Activated B cell treated with CpG ODN at 0.5 μM for 24 hours (primary cell): ENCODE measurements at regions of chr20 and their contacts with region 1.

Region 1: DNA sequence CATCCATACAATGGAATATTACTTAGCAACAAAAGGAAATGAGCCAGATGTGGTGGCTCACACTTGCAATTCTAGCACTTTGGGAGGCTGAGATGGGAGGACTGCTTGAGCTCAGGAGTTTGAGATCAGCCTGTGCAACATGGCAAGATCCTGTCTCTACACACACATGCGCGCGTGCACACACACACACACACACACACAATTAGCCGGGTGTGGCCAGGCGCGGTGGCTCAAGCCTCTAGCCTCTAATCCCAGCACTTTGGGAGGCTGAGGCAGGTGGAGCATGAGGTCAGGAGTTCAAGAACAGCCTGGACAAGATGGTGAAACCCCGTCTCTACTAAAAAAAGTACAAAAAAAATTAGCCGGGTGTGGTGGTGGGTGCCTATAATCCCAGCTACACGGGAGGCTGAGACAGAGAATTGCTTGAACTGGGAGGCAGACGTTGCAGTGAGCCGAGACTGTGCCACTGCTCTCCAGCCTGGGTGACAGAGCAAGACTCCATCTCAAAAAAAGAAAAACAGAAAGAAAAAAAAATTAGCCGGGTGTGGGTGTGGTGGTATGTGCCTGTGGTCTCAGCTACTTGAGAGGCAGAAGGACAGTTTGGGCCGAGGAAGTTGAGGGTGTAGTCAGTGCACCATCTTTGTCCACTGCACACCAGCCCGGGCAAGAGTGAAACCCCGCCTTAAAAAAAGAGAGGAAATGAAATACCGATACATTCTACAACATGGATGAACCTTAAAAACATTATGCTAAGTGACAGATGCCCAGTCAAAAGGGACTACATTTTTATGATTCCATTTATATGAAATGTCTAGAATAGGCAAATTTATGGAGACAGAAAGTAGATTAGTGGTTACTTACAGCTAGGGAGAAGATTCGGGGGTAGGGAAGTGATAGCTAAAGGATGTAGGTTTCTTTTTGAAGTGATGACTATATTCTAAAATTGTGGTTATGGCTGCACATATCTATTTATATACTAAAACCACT is 52.5 kb downstream of the RBL1 start:
- DNase-seq: peak; percentile 15
- ATAC-seq: peak; percentile 61
- H3K4me3 Mint-ChIP-seq: peak overlapping the region; percentile 80
- H3K27ac Mint-ChIP-seq: peak overlapping the region; percentile 97
- H3K4me1 Mint-ChIP-seq: peaks cover 30% of the 10 kb centered on the region
- H3K27me3 Mint-ChIP-seq: no peaks in the 10 kb centered on the region
- CTCF ChIP-seq: no peak

Region 2: DNA sequence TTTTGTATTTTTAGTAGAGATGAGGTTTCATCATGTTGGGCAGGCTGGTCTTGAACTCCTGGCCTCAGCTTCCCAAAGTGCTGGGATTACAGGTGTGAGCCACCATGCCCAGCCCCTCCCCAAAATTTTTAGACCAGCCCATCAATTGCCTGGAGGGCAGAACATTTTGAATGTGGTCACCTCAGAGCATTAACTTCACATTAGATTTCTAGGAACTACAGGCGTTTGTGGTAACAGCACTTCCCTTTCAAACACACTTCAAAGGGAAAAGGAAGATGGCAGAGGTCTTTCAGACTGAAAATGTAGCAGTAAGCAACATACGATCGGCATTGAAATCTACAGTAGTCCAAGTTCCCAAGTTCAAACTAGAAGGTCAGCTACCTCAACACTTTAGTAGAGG is 385.0 kb before region 1 on chr20:
- CTCF ChIA-PET with region 1: no interaction called
- POLR2A ChIA-PET with region 1: no interaction called
- intact Hi-C with region 1: no loop called
- DNase-seq: no peak
- ATAC-seq: no peak
- H3K4me3 Mint-ChIP-seq: no peak overlapping the region
- H3K27ac Mint-ChIP-seq: no peak overlapping the region
- H3K4me1 Mint-ChIP-seq: no peaks in the 10 kb centered on the region
- H3K27me3 Mint-ChIP-seq: no peaks in the 10 kb centered on the region
- CTCF ChIP-seq: no peak

Region 3: GRCh38 chr20:36847009-36847709 is 196.1 kb before region 1 on chr20:
- CTCF ChIA-PET with region 1: no interaction called
- POLR2A ChIA-PET with region 1: no interaction called
- intact Hi-C with region 1: loop called (anchors 2 kb)
- DNase-seq: no peak
- ATAC-seq: no peak
- H3K4me3 Mint-ChIP-seq: peak overlapping the region; percentile 74
- H3K27ac Mint-ChIP-seq: peak overlapping the region; percentile 95
- H3K4me1 Mint-ChIP-seq: peaks cover 91% of the 10 kb centered on the region
- H3K27me3 Mint-ChIP-seq: no peaks in the 10 kb centered on the region
- CTCF ChIP-seq: no peak

Region 4: GRCh38 chr20:36951198-36951976 is 91.9 kb before region 1 on chr20 and contains the start of gene SAMHD1:
- CTCF ChIA-PET with region 1: no interaction called
- POLR2A ChIA-PET with region 1: interaction called, 7 read pairs
- intact Hi-C with region 1: loop called (anchors 1 kb)
- DNase-seq: peak; percentile 85
- ATAC-seq: peak; percentile 97
- H3K4me3 Mint-ChIP-seq: peak within 1 kb of the TSS; percentile 96
- H3K27ac Mint-ChIP-seq: peak within 1 kb of the TSS; percentile 81
- H3K4me1 Mint-ChIP-seq: peaks cover 24% of the 10 kb centered on the region
- H3K27me3 Mint-ChIP-seq: no peaks in the 10 kb centered on the region
- CTCF ChIP-seq: no peak
- total RNA-seq, gene SAMHD1: 15.1 and 16.4 TPM in 2 replicates

Region 5: DNA sequence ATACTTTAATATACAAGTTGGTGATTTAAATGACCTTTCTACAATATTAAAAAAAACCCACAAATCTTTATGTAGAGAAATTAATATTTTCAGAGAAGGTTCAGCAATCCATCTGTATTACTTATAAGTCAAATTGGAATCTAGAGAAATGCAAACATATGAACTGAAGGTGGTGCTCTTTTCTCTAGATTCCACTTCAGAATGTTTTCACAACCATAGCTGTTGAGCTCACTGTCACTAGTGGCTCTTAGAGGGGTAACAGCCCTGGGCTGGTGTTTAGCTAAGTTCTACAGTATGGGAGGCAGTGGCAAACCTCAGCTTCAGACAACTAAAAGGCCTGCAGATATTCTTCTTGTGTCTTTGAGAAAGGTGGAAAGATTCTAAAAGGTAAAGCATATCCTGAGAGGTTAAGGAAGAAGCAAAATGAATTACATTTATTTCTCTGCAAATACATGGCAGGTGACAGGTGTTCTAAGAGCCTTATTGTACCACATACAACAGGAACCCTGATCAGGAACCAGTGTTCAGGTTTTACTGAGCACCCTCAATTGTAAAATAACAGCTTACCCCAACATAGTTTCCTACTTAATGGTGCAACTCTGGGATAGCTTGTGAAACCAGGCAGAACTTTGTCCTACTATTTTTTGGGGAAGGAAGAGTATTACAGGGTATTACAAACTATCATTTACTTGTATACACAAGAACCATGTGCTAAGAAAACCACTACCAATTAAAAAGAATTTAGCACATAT is 35.2 kb before region 1 on chr20:
- CTCF ChIA-PET with region 1: no interaction called
- POLR2A ChIA-PET with region 1: interaction called, 24 read pairs
- intact Hi-C with region 1: loop called (anchors 1 kb)
- DNase-seq: no peak
- ATAC-seq: peak; percentile 26
- H3K4me3 Mint-ChIP-seq: peak overlapping the region; percentile 17
- H3K27ac Mint-ChIP-seq: peak overlapping the region; percentile 69
- H3K4me1 Mint-ChIP-seq: peaks cover 45% of the 10 kb centered on the region
- H3K27me3 Mint-ChIP-seq: no peaks in the 10 kb centered on the region
- CTCF ChIP-seq: no peak

Region 6: DNA sequence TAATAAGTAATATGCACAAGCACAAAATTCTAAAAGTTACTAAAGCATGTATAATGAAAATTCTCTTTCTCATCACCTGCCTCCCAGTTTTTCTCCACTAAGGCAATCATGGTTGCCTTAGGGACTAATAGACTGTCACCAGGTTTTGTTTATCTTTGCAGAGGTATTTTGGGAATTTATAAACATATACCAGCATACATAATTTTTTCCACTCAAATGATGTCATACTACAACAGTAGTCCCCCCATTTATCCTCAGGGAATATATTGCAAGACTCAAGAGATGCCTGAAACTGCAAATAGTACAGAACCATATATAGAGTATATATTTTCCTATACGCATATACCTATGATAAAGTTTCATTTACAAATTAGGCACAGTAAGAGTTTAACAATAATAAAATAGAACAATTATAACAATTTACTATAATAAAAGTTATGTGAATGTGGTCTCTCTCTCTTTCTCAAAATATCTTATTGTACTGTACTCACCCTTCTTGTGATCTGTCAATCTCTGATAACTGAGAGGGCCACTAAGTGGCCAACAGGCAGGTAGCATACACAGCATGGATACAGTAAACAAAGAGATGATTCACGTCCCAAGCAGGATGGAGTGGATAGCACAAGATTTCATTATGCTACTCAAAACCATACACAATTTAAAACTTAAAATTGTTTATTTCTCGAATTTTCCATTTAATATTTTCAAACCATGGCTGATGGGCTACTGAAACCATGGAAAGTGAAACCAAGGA is 32.8 kb after region 1 on chr20:
- CTCF ChIA-PET with region 1: interaction called, 5 read pairs
- POLR2A ChIA-PET with region 1: interaction called, 3 read pairs
- intact Hi-C with region 1: loop called (anchors 5 kb)
- DNase-seq: no peak
- ATAC-seq: no peak
- H3K4me3 Mint-ChIP-seq: no peak overlapping the region
- H3K27ac Mint-ChIP-seq: no peak overlapping the region
- H3K4me1 Mint-ChIP-seq: peaks cover 23% of the 10 kb centered on the region
- H3K27me3 Mint-ChIP-seq: no peaks in the 10 kb centered on the region
- CTCF ChIP-seq: no peak

Region 7: GRCh38 chr20:37095599-37096414 is 52.5 kb after region 1 on chr20 and contains the start of gene RBL1:
- CTCF ChIA-PET with region 1: no interaction called
- POLR2A ChIA-PET with region 1: interaction called, 43 read pairs
- intact Hi-C with region 1: loop called (anchors 1 kb)
- DNase-seq: peak; percentile 85
- ATAC-seq: peak; percentile 87
- H3K4me3 Mint-ChIP-seq: peak within 1 kb of the TSS; percentile 99
- H3K27ac Mint-ChIP-seq: peak within 1 kb of the TSS; percentile 100
- H3K4me1 Mint-ChIP-seq: peaks cover 33% of the 10 kb centered on the region
- H3K27me3 Mint-ChIP-seq: no peaks in the 10 kb centered on the region
- CTCF ChIP-seq: no peak
- total RNA-seq, gene RBL1: 18.6 and 20.4 TPM in 2 replicates

Region 8: GRCh38 chr20:37356387-37356786 is 313.1 kb after region 1 on chr20:
- CTCF ChIA-PET with region 1: no interaction called
- POLR2A ChIA-PET with region 1: no interaction called
- intact Hi-C with region 1: no loop called
- DNase-seq: no peak
- ATAC-seq: no peak
- H3K4me3 Mint-ChIP-seq: no peak overlapping the region
- H3K27ac Mint-ChIP-seq: no peak overlapping the region
- H3K4me1 Mint-ChIP-seq: peaks cover 32% of the 10 kb centered on the region
- H3K27me3 Mint-ChIP-seq: no peaks in the 10 kb centered on the region
- CTCF ChIP-seq: no peak